Spleen (tissue), 13 donors: ENCODE measurements at regions of chr6 and their contacts with region 1.

Region 1: GRCh38 chr6:128731249-128732165 is 151.4 kb upstream of the LAMA2 start:
- DNase-seq: no peak
- H3K4me3 ChIP-seq: no peak overlapping the region
- H3K27ac ChIP-seq: no peak overlapping the region
- H3K4me1 ChIP-seq: no peaks in the 10 kb centered on the region
- H3K27me3 ChIP-seq: peaks cover 0 to 4% (median 0%) of the 10 kb centered on the region in 7 donors
- CTCF ChIP-seq: peak in 5 of 11 experiments; percentile 14 to 30 (median 23)
- POLR2A ChIP-seq: no peak

Region 2: GRCh38 chr6:127737009-127737486 is 994.5 kb before region 1 on chr6:
- intact Hi-C with region 1: loop called (anchors 10 kb)
- DNase-seq: no peak
- H3K4me3 ChIP-seq: no peak overlapping the region
- H3K27ac ChIP-seq: no peak overlapping the region
- H3K4me1 ChIP-seq: no peaks in the 10 kb centered on the region
- H3K27me3 ChIP-seq: peaks cover 0 to 11% (median 0%) of the 10 kb centered on the region in 7 donors
- CTCF ChIP-seq: peak in 10 of 11 experiments; percentile 15 to 62 (median 56)
- POLR2A ChIP-seq: no peak